ENCODE measurements at regions of chr1 and their contacts with region 1.

Region 1: GRCh38 chr1:150072959-150073358 is 5.4 kb downstream of the VPS45 start:
- DNase-seq: peak; percentile 51
- ATAC-seq: peak; percentile 70
- H3K4me3 ChIP-seq: no peak overlapping the region
- H3K27ac ChIP-seq: no peak overlapping the region
- H3K4me1 ChIP-seq: peaks cover 5% of the 10 kb centered on the region; the same call in 1 of the 2 replicates
- H3K27me3 ChIP-seq: no peaks in the 10 kb centered on the region
- CTCF ChIP-seq: peak; percentile 74

Region 2: DNA sequence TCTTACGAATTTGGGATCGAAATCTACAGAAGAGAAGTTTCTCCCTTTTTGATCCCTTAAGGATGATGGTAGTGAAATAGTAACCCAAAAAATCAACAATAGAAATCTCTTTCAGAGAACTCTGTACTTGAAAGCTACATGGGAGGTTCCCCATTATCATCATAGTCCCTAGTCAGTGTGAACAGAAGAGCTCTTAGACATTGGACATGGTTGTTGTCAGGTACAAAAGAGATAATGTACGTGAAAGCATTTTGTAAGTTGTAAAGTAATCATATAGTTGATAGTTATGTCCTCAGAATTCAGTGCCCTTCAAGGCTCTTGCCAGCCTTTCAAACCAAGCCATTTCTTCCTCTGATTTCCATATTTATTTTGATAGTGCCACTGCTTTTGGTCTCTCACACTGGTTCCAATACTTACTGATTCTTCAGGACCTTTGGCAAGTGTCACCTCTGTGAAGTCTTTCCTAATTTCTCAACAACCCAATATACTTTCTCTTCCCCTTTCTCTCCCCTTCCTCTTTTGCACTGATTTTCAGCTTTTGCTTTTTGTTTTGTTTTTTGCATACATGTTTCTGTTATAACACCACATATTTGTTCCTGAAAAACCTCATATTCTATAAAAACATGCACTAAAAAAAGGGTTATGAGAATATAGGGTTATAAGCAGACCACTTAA is 17.0 kb after region 1 on chr1:
- CTCF ChIA-PET with region 1: no interaction called
- POLR2A ChIA-PET with region 1: interaction called, 14 read pairs
- intact Hi-C with region 1: no loop called
- DNase-seq: no peak
- ATAC-seq: no peak
- H3K4me3 ChIP-seq: no peak overlapping the region
- H3K27ac ChIP-seq: no peak overlapping the region
- H3K4me1 ChIP-seq: no peaks in the 10 kb centered on the region
- H3K27me3 ChIP-seq: no peaks in the 10 kb centered on the region
- CTCF ChIP-seq: no peak

Region 3: GRCh38 chr1:150127868-150128267 is 54.9 kb after region 1 on chr1:
- CTCF ChIA-PET with region 1: no interaction called
- POLR2A ChIA-PET with region 1: interaction called, 20 read pairs
- intact Hi-C with region 1: no loop called
- DNase-seq: peak; percentile 44
- ATAC-seq: no peak
- H3K4me3 ChIP-seq: no peak overlapping the region
- H3K27ac ChIP-seq: no peak overlapping the region
- H3K4me1 ChIP-seq: peaks cover 7% of the 10 kb centered on the region; the same call in 1 of the 2 replicates
- H3K27me3 ChIP-seq: no peaks in the 10 kb centered on the region
- CTCF ChIP-seq: no peak

Region 4: GRCh38 chr1:150168960-150169601 is 96.1 kb after region 1 on chr1:
- CTCF ChIA-PET with region 1: interaction called, 8 read pairs
- POLR2A ChIA-PET with region 1: no interaction called
- intact Hi-C with region 1: loop called (anchors 1 kb)
- DNase-seq: peak; percentile 78
- ATAC-seq: peak; percentile 83
- H3K4me3 ChIP-seq: no peak overlapping the region
- H3K27ac ChIP-seq: no peak overlapping the region
- H3K4me1 ChIP-seq: no peaks in the 10 kb centered on the region
- H3K27me3 ChIP-seq: no peaks in the 10 kb centered on the region
- CTCF ChIP-seq: peak; percentile 98

Region 5: DNA sequence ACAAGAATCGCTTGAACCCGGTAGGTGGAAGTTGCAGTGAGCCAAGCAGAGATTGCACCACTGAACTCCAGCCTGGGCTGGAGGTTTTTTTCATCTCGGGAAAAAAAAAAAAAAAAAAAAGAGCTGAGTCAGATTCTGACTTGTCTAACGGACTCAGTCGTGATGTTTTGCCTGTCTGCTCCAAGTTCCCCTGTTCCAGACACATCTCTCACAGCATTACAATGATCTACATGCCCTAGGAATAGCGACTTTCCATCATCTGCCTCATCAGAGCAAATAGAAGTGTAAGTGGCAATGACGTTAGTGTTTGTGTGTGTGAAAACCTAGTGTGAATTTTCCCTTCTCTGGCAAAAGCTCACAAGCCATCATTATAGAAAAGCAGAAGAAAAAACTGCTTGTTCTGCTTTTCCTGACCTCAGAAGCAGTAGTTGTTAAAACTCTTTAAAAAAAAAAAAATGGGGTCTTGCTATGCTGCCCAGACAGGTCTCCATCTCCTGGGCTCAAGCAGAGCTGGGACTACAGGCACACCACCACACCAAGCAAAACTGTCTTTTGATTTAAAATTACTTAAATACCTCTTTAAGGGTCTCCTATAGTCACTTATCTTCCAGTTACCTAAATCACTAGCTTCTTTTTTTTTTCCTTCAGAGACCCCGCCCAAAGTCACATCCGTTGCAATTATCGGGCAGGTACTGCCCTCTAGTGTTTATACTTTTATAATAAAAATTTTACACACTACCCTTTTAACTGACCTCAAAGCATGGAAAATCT is 114.0 kb after region 1 on chr1:
- CTCF ChIA-PET with region 1: interaction called, 20 read pairs
- POLR2A ChIA-PET with region 1: no interaction called
- intact Hi-C with region 1: loop called (anchors 1 kb)
- DNase-seq: peak; percentile 76
- ATAC-seq: peak; percentile 12
- H3K4me3 ChIP-seq: no peak overlapping the region
- H3K27ac ChIP-seq: peak overlapping the region; percentile 54
- H3K4me1 ChIP-seq: peaks cover 18% of the 10 kb centered on the region
- H3K27me3 ChIP-seq: no peaks in the 10 kb centered on the region
- CTCF ChIP-seq: peak; percentile 83

Region 6: DNA sequence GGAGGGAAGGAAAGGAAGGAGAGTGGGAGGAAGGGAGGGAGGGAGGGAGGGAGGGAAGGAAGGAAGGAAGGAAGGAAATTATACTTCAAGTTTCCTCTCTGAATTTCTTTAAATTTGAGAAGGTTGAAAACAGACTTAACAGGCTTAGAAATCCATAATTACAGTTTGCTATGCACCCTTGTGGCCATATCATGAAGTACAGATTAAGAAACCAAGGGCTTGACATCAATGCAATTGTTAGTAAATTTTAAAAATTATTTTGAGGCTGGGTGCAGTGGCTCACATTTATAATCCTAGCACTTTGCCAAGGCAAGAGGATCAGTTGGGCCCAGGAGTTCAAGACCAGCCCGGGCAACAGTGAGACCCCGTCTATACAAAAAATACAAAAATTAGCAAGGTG is 148.6 kb after region 1 on chr1:
- CTCF ChIA-PET with region 1: no interaction called
- POLR2A ChIA-PET with region 1: no interaction called
- intact Hi-C with region 1: loop called (anchors 1 kb)
- DNase-seq: peak; percentile 64
- ATAC-seq: peak; percentile 62
- H3K4me3 ChIP-seq: no peak overlapping the region
- H3K27ac ChIP-seq: no peak overlapping the region
- H3K4me1 ChIP-seq: no peaks in the 10 kb centered on the region
- H3K27me3 ChIP-seq: no peaks in the 10 kb centered on the region
- CTCF ChIP-seq: peak; percentile 67

Measured in PC-3 (cell line).